ENCODE measurements at regions of chr15 and their contacts with region 1.

Region 1: GRCh38 chr15:83747050-83747717 is 93.3 kb downstream of the ADAMTSL3 start:
- DNase-seq: peak; percentile 48
- H3K4me3 Mint-ChIP-seq: no peak overlapping the region
- H3K27ac Mint-ChIP-seq: no peak overlapping the region
- H3K4me1 Mint-ChIP-seq: peaks cover 12% of the 10 kb centered on the region
- H3K27me3 Mint-ChIP-seq: no peaks in the 10 kb centered on the region
- CTCF ChIP-seq: no peak

Region 2: DNA sequence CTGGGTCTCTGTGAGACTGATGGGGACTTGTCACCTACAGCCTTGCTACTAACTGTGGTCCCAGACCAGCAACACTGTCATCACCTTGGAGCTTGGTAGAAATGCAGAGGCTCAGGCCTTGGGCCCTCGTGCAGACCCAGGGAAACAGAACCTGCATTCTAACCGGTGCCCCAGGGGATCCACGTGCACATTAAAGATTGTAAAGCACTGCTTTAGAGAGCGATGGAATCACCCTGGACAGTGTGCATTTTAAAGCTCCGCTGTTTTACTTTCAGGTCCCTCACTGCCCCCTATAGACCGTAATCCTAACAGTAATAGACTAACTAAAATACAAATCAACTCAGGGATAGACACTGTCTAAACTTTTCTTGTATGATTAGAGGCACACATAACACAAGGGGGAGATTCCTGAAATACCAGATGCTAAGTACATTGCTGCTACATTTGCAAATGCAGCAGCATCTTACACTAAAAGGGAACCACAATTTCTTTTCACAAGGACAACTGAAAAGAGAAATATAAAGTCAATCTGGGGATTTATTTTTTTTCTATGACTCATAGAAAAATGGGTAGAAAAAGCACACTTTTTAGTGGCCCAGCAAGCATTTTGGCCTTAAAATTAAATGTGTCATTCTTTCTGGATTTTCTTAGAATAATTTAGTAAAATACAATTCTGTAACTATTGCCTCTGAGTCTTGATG is 310.6 kb before region 1 on chr15:
- CTCF ChIA-PET with region 1: no interaction called
- intact Hi-C with region 1: loop called (anchors 2 kb)
- DNase-seq: peak; percentile 25
- H3K4me3 Mint-ChIP-seq: no peak overlapping the region
- H3K27ac Mint-ChIP-seq: no peak overlapping the region
- H3K4me1 Mint-ChIP-seq: no peaks in the 10 kb centered on the region
- H3K27me3 Mint-ChIP-seq: peaks cover 51% of the 10 kb centered on the region
- CTCF ChIP-seq: peak; percentile 52

Region 3: DNA sequence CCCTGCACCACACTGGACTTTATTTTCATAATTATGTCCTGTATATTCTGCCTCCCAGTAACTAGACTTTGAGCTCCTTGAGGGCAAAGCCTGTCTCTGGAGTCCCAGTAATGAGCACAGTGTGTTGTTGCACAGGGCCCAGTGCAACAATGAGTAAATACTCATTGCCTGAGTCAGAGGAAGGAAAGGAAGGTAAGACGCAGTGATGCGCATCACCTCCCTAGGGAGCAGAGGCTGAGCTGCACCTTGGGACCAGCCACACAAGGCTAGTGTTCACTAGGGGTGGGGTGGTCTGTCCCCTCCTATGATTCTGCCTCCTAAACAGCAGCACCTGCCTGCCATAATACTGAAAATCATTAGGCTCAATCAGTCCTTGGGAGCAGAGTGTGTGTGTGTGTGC is 179.9 kb before region 1 on chr15:
- CTCF ChIA-PET with region 1: interaction called, 18 read pairs
- intact Hi-C with region 1: loop called (anchors 1 kb)
- DNase-seq: no peak
- H3K4me3 Mint-ChIP-seq: no peak overlapping the region
- H3K27ac Mint-ChIP-seq: no peak overlapping the region
- H3K4me1 Mint-ChIP-seq: no peaks in the 10 kb centered on the region
- H3K27me3 Mint-ChIP-seq: no peaks in the 10 kb centered on the region
- CTCF ChIP-seq: no peak

Region 4: GRCh38 chr15:83653639-83654378 is 93.4 kb before region 1 on chr15 and contains the start of gene ADAMTSL3:
- CTCF ChIA-PET with region 1: no interaction called
- intact Hi-C with region 1: loop called (anchors 5 kb)
- DNase-seq: peak; percentile 83
- H3K4me3 Mint-ChIP-seq: peak within 1 kb of the TSS; percentile 48
- H3K27ac Mint-ChIP-seq: no peak within 1 kb of the TSS
- H3K4me1 Mint-ChIP-seq: peaks cover 13% of the 10 kb centered on the region
- H3K27me3 Mint-ChIP-seq: peaks cover 43% of the 10 kb centered on the region
- CTCF ChIP-seq: no peak
- total RNA-seq, gene ADAMTSL3: 1.1 and 2.4 TPM in 2 replicates

Region 5: DNA sequence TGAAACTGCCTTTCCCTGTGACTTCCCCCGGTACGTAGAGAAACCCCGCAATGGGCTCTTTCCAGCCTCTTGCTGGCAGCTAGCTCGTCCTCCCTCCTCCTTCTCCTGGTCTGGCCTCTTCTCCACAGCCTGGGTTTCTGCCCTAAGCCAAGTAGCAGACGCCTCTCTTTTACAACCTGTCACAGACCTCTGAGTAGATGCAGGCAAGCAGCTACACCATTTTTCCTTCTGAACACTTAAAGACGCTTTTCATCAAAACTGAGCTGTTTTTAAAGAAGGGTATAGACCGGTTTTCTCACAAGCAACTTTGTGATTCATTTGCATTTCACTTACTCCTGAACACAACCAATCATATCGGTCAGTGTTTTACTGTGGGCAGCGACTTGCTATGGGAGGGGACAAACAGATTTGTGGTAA is 61.3 kb before region 1 on chr15:
- CTCF ChIA-PET with region 1: no interaction called
- intact Hi-C with region 1: no loop called
- DNase-seq: no peak
- H3K4me3 Mint-ChIP-seq: no peak overlapping the region
- H3K27ac Mint-ChIP-seq: no peak overlapping the region
- H3K4me1 Mint-ChIP-seq: peaks cover 14% of the 10 kb centered on the region
- H3K27me3 Mint-ChIP-seq: peaks cover 14% of the 10 kb centered on the region
- CTCF ChIP-seq: no peak

Region 6: DNA sequence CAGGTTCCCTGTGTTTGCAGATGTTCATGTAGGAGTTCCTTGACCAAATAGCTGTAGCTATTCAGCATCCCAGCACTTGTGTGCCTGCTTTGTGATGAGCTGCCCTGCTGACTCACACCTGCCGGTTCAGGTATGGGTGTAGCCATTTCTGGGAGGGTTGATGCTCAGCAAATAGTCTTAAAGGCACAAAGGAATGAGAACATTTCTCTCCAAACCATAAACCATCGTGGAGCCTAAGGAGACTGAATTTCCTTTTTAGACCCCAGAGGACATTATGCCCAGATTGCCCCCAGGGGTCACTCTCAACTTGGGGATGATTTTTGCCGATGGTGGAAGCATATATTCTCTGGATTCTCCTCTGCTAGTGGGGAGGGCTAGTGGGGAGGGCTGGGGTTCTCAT is 12.7 kb before region 1 on chr15:
- CTCF ChIA-PET with region 1: interaction called, 5 read pairs
- intact Hi-C with region 1: loop called (anchors 2 kb)
- DNase-seq: peak; percentile 63
- H3K4me3 Mint-ChIP-seq: no peak overlapping the region
- H3K27ac Mint-ChIP-seq: no peak overlapping the region
- H3K4me1 Mint-ChIP-seq: peaks cover 26% of the 10 kb centered on the region
- H3K27me3 Mint-ChIP-seq: no peaks in the 10 kb centered on the region
- CTCF ChIP-seq: peak; percentile 40

Region 7: GRCh38 chr15:84023636-84024035 is 276.5 kb after region 1 on chr15:
- CTCF ChIA-PET with region 1: no interaction called
- intact Hi-C with region 1: loop called (anchors 2 kb)
- DNase-seq: peak; percentile 69
- H3K4me3 Mint-ChIP-seq: no peak overlapping the region
- H3K27ac Mint-ChIP-seq: no peak overlapping the region
- H3K4me1 Mint-ChIP-seq: no peaks in the 10 kb centered on the region
- H3K27me3 Mint-ChIP-seq: peaks cover 18% of the 10 kb centered on the region
- CTCF ChIP-seq: peak; percentile 66